ENCODE measurements at regions of chr1 and their contacts with region 1.

Region 1: GRCh38 chr1:27430903-27431600 is 38.6 kb downstream of the GPR3 start:
- DNase-seq: peak in 9 of 14 experiments; percentile 7 to 83 (median 19)
- ATAC-seq: peak; percentile 87
- H3K4me3 ChIP-seq: peak overlapping the region; percentile 16
- H3K4me3 Mint-ChIP-seq: peak overlapping the region; percentile 74
- H3K27ac ChIP-seq: peak overlapping the region; percentile 46 to 56
- H3K27ac Mint-ChIP-seq: peak overlapping the region; percentile 86
- H3K4me1 ChIP-seq: peaks cover 90% of the 10 kb centered on the region
- H3K4me1 Mint-ChIP-seq: peaks cover 87% of the 10 kb centered on the region
- H3K27me3 ChIP-seq: no peaks in the 10 kb centered on the region
- H3K27me3 Mint-ChIP-seq: no peaks in the 10 kb centered on the region
- CTCF ChIP-seq: peak; percentile 4

Region 2: DNA sequence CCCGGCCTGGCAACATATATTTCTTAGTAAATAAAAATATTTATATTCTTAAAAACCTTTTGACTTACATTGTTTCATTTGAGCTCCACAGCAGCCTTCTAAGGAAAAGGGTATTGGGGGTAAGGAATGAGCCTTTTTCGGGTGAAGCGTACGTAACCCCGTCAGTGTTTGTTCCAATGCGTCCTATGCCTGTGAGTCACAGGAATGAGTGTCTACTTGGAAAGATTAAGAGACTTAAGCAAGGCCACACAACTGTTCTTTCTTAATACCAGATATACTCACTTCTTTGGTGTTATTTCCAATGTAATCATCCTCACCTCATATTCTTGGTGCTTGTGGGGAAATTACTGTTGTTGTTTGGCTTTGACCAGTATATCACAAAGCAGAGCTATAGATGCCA is 173.9 kb before region 1 on chr1:
- CTCF ChIA-PET with region 1: no interaction called
- POLR2A ChIA-PET with region 1: no interaction called
- intact Hi-C with region 1: no loop called
- DNase-seq: no peak
- ATAC-seq: no peak
- H3K4me3 ChIP-seq: no peak overlapping the region
- H3K4me3 Mint-ChIP-seq: no peak overlapping the region
- H3K27ac ChIP-seq: no peak overlapping the region
- H3K27ac Mint-ChIP-seq: peak overlapping the region; percentile 58
- H3K4me1 ChIP-seq: peaks cover 20% of the 10 kb centered on the region
- H3K4me1 Mint-ChIP-seq: peaks cover 57% of the 10 kb centered on the region
- H3K27me3 ChIP-seq: no peaks in the 10 kb centered on the region
- H3K27me3 Mint-ChIP-seq: no peaks in the 10 kb centered on the region
- CTCF ChIP-seq: no peak

Region 3: DNA sequence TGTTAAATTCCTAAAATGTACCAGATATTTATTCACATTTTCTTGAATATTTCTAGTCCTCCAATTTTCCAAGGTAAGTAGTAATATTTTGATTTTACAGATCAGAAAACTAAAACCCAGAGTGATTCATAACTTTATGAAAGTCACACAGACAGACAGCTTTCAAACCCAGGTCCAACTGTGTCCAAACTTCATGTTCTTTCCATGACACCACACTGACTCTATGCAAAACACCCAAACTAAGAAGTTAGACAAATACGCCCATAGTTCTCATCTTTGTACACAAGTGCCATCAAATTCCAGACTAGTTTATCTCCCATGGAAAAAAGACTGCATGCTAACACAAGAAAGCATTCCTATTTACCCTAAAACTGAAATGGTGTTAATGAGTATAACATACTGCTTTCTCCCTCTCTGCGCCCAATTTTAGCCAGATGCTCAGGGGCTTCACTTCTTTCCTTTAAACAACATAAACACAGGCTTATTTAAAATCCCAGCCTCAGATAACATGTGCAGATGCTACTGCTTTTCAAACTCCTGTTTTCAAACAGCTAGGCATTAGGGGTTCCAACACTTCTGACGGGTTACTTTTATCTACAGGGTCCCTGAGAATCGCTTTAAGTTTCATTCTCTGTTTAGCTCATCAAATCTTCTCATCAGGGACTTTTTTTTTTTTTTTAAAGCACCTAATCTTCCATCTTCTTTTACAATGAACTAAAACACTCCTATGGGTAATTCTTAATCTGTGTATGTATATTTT is 14.3 kb after region 1 on chr1:
- CTCF ChIA-PET with region 1: interaction called, 18 read pairs
- POLR2A ChIA-PET with region 1: interaction called, 7 read pairs
- intact Hi-C with region 1: loop called in 1 of 2 experiments (anchors 2 kb)
- DNase-seq: peak in 1 of 14 experiments; percentile 27
- ATAC-seq: peak; percentile 52
- H3K4me3 ChIP-seq: no peak overlapping the region
- H3K4me3 Mint-ChIP-seq: peak overlapping the region; percentile 75
- H3K27ac ChIP-seq: no peak overlapping the region
- H3K27ac Mint-ChIP-seq: peak overlapping the region; percentile 91
- H3K4me1 ChIP-seq: peaks cover 10% of the 10 kb centered on the region
- H3K4me1 Mint-ChIP-seq: peaks cover 52% of the 10 kb centered on the region
- H3K27me3 ChIP-seq: no peaks in the 10 kb centered on the region
- H3K27me3 Mint-ChIP-seq: no peaks in the 10 kb centered on the region
- CTCF ChIP-seq: no peak

Region 4: DNA sequence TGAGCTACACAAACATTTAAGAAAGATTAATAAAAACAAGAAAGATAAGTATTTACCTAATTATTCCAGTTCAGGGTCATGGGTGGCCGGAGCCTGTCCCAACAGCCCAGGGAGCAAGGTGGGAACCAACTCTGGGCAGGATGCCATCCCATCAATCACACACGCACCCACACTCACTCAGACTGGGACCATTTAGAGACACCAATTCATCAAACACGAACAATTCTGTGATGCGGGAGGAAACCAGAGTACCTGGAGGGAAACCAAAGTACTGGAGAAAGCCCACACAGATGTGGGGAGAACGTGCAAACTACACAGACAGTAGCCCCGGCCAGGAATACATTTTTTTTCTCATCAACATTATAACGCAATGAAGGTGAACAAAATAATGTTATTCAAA is 42.7 kb after region 1 on chr1:
- CTCF ChIA-PET with region 1: interaction called, 3 read pairs
- POLR2A ChIA-PET with region 1: interaction called, 3 read pairs
- intact Hi-C with region 1: loop called (anchors 5 kb)
- DNase-seq: peak in 2 of 14 experiments; percentile 3 to 18
- ATAC-seq: peak; percentile 32
- H3K4me3 ChIP-seq: no peak overlapping the region
- H3K4me3 Mint-ChIP-seq: peak overlapping the region; percentile 16
- H3K27ac ChIP-seq: no peak overlapping the region
- H3K27ac Mint-ChIP-seq: peak overlapping the region; percentile 57
- H3K4me1 ChIP-seq: peaks cover 59% of the 10 kb centered on the region
- H3K4me1 Mint-ChIP-seq: peaks cover 73% of the 10 kb centered on the region
- H3K27me3 ChIP-seq: no peaks in the 10 kb centered on the region
- H3K27me3 Mint-ChIP-seq: no peaks in the 10 kb centered on the region
- CTCF ChIP-seq: no peak

Region 5: GRCh38 chr1:27676410-27676809 is 245.4 kb after region 1 on chr1:
- CTCF ChIA-PET with region 1: no interaction called
- POLR2A ChIA-PET with region 1: no interaction called
- intact Hi-C with region 1: no loop called
- DNase-seq: no peak
- ATAC-seq: no peak
- H3K4me3 ChIP-seq: no peak overlapping the region
- H3K4me3 Mint-ChIP-seq: no peak overlapping the region
- H3K27ac ChIP-seq: no peak overlapping the region
- H3K27ac Mint-ChIP-seq: no peak overlapping the region
- H3K4me1 ChIP-seq: peaks cover 14% of the 10 kb centered on the region
- H3K4me1 Mint-ChIP-seq: peaks cover 14% of the 10 kb centered on the region
- H3K27me3 ChIP-seq: no peaks in the 10 kb centered on the region
- H3K27me3 Mint-ChIP-seq: no peaks in the 10 kb centered on the region
- CTCF ChIP-seq: no peak